ENCODE measurements at regions of chr7 and their contacts with region 1.

Region 1: GRCh38 chr7:157362729-157363128 is 25.9 kb downstream of the DNAJB6 start:
- DNase-seq: no peak
- H3K4me3 ChIP-seq: no peak overlapping the region
- H3K27ac ChIP-seq: no peak overlapping the region
- H3K4me1 ChIP-seq: peaks cover 0 to 4% of the 10 kb centered on the region in 2 experiments; a peak in 1 of 4 replicates
- H3K27me3 ChIP-seq: no peaks in the 10 kb centered on the region
- CTCF ChIP-seq: no peak
- EP300 ChIP-seq: no peak
- RAD21 ChIP-seq: no peak

Region 2: GRCh38 chr7:157280216-157280841 is 82.4 kb before region 1 on chr7:
- CTCF ChIA-PET with region 1: no interaction called
- POLR2A ChIA-PET with region 1: no interaction called
- DNase-seq: peak; percentile 41
- H3K4me3 ChIP-seq: no peak overlapping the region
- H3K27ac ChIP-seq: no peak overlapping the region
- H3K4me1 ChIP-seq: peaks cover 17 to 19% of the 10 kb centered on the region in 2 experiments; a peak in 3 of 4 replicates
- H3K27me3 ChIP-seq: no peaks in the 10 kb centered on the region
- CTCF ChIP-seq: no peak
- EP300 ChIP-seq: no peak
- RAD21 ChIP-seq: no peak

Region 3: GRCh38 chr7:157377436-157378124 is 14.9 kb after region 1 on chr7:
- CTCF ChIA-PET with region 1: interaction called, 10 read pairs
- POLR2A ChIA-PET with region 1: no interaction called
- DNase-seq: no peak
- H3K4me3 ChIP-seq: no peak overlapping the region
- H3K27ac ChIP-seq: no peak overlapping the region
- H3K4me1 ChIP-seq: no peaks in the 10 kb centered on the region; a peak in 1 of 4 replicates
- H3K27me3 ChIP-seq: no peaks in the 10 kb centered on the region
- CTCF ChIP-seq: no peak
- EP300 ChIP-seq: no peak
- RAD21 ChIP-seq: no peak